ENCODE measurements at regions of chr9 and their contacts with region 1.

Region 1: GRCh38 chr9:79264511-79265355 is 307.0 kb upstream of the TLE4 start:
- DNase-seq: no peak
- H3K4me3 ChIP-seq: no peak overlapping the region
- H3K27ac ChIP-seq: no peak overlapping the region
- H3K4me1 ChIP-seq: no peaks in the 10 kb centered on the region
- H3K27me3 ChIP-seq: no peaks in the 10 kb centered on the region
- CTCF ChIP-seq: no peak

Region 2: GRCh38 chr9:78958892-78959291 is 305.8 kb before region 1 on chr9:
- CTCF ChIA-PET with region 1: no interaction called
- dilution Hi-C with region 1: no loop called
- in situ Hi-C with region 1: no loop called
- intact Hi-C with region 1: no loop called
- DNase-seq: peak; percentile 11
- H3K4me3 ChIP-seq: no peak overlapping the region
- H3K27ac ChIP-seq: no peak overlapping the region
- H3K4me1 ChIP-seq: no peaks in the 10 kb centered on the region
- H3K27me3 ChIP-seq: no peaks in the 10 kb centered on the region
- CTCF ChIP-seq: peak in 1 of 2 donors; percentile 35

Region 3: DNA sequence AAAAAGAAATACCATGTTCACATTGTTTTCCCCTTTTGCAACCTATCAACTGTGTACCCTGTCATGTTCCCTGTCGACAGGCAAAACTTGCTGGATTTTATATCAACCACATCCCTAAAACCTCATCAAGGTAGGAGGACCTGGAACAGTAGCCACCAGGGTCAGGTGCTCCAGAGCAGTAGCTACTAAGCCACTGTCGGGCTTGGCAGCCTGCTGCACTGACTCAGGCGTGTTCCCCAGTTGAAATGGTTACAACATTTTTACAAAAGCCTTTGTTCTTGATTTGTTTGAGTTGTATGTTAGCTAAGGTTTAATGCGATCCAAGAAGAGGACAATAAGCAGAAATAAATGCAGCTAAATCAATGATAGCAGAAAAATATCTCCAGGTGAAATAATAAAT is 100.3 kb before region 1 on chr9:
- CTCF ChIA-PET with region 1: no interaction called
- dilution Hi-C with region 1: loop called (anchors 5 kb)
- in situ Hi-C with region 1: no loop called
- intact Hi-C with region 1: no loop called
- DNase-seq: peak; percentile 52
- H3K4me3 ChIP-seq: no peak overlapping the region
- H3K27ac ChIP-seq: no peak overlapping the region
- H3K4me1 ChIP-seq: peaks cover 12% of the 10 kb centered on the region
- H3K27me3 ChIP-seq: peaks cover 1% of the 10 kb centered on the region
- CTCF ChIP-seq: no peak

Region 4: GRCh38 chr9:79184806-79185205 is 79.9 kb before region 1 on chr9:
- CTCF ChIA-PET with region 1: no interaction called
- dilution Hi-C with region 1: no loop called
- in situ Hi-C with region 1: no loop called
- intact Hi-C with region 1: no loop called
- DNase-seq: no peak
- H3K4me3 ChIP-seq: no peak overlapping the region
- H3K27ac ChIP-seq: no peak overlapping the region
- H3K4me1 ChIP-seq: no peaks in the 10 kb centered on the region
- H3K27me3 ChIP-seq: no peaks in the 10 kb centered on the region
- CTCF ChIP-seq: no peak

Region 5: GRCh38 chr9:79287708-79288290 is 23.1 kb after region 1 on chr9:
- CTCF ChIA-PET with region 1: no interaction called
- dilution Hi-C with region 1: no loop called
- in situ Hi-C with region 1: no loop called
- intact Hi-C with region 1: no loop called
- DNase-seq: no peak
- H3K4me3 ChIP-seq: no peak overlapping the region
- H3K27ac ChIP-seq: no peak overlapping the region
- H3K4me1 ChIP-seq: no peaks in the 10 kb centered on the region
- H3K27me3 ChIP-seq: no peaks in the 10 kb centered on the region
- CTCF ChIP-seq: no peak

Region 6: DNA sequence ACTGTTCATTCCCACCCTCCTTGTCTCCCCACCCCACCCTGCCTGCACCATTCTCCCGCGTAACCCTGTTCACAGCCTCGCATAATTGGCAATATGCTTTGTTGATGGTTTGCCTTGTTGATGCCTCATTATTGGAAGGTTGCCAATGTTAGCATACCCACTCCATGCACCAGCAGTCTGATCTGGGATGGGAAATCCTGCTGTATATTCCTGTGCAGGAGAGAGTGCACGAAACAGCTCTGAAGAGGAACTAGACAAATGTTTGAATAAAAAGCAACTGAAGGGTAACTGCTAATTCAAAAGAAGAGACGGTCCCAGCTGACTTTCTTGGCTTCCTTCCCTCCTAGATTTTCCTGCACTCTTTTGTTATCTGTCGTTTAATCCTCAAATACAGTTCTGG is 35.3 kb after region 1 on chr9:
- CTCF ChIA-PET with region 1: no interaction called
- dilution Hi-C with region 1: no loop called
- in situ Hi-C with region 1: no loop called
- intact Hi-C with region 1: no loop called
- DNase-seq: no peak
- H3K4me3 ChIP-seq: no peak overlapping the region
- H3K27ac ChIP-seq: no peak overlapping the region
- H3K4me1 ChIP-seq: peaks cover 3% of the 10 kb centered on the region
- H3K27me3 ChIP-seq: no peaks in the 10 kb centered on the region
- CTCF ChIP-seq: no peak

Measured in mammary epithelial cell (primary cell).